Activated CD8-positive, alpha-beta T cell treated with anti-CD3 and anti-CD28 coated beads, Interleukin-2, amount 10 ng/mL, durations not matched to agents 7 days and 5 days (primary cell): ENCODE measurements at regions of chr11 and their contacts with region 1.

Region 1: DNA sequence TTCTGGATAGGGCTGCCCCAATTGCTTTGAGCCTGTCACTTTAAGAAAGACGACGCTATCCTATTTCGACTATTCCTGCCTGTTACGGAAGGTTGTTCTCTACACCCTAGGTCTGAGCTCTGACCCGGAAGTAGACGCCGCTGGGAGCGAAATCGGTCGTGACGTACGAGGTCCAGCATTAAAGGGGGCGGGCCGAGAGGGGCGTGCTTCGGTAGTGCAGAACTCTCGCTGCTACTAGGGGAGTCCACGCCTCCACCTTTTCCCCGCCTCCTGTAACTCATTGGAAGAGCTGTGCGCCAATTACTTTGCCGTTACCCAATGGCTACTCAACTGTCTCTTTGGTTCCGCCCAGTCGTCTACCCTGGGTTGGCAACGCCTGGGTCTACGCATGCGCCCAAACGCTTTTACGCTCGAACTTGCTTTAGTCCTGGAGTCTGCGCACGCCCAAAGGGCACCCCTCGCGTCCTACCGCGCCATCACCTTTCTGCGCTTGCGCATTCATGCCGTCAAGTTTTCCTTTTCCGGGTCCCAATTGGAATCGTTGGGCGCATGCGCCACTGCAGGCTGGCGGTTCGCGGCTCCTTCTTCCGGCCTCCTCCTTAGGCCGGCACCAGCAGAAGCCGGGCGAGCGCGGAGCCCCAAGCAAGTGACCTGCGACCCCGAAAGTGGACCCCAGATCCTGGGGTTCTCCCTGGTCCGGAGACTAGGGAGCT is at the start of gene PCNX3:
- DNase-seq: peak; percentile 100
- ATAC-seq: peak; percentile 91
- H3K4me3 Mint-ChIP-seq: peak within 1 kb of the TSS; percentile 98
- H3K27ac Mint-ChIP-seq: peak within 1 kb of the TSS; percentile 97
- H3K4me1 Mint-ChIP-seq: peaks cover 44% of the 10 kb centered on the region
- H3K27me3 Mint-ChIP-seq: no peaks in the 10 kb centered on the region
- total RNA-seq, gene PCNX3: 50.1 to 54.8 TPM

Region 2: GRCh38 chr11:65432686-65433582 is 182.5 kb before region 1 on chr11:
- CTCF ChIA-PET with region 1: no interaction called
- POLR2A ChIA-PET with region 1: no interaction called
- DNase-seq: no peak
- ATAC-seq: no peak
- H3K4me3 Mint-ChIP-seq: no peak overlapping the region
- H3K27ac Mint-ChIP-seq: peak overlapping the region; percentile 50
- H3K4me1 Mint-ChIP-seq: peaks cover 82% of the 10 kb centered on the region
- H3K27me3 Mint-ChIP-seq: no peaks in the 10 kb centered on the region

Region 3: GRCh38 chr11:65454696-65455456 is 160.5 kb before region 1 on chr11:
- CTCF ChIA-PET with region 1: no interaction called
- POLR2A ChIA-PET with region 1: no interaction called
- DNase-seq: peak; percentile 90
- ATAC-seq: peak; percentile 97
- H3K4me3 Mint-ChIP-seq: peak overlapping the region; percentile 86
- H3K27ac Mint-ChIP-seq: peak overlapping the region; percentile 83
- H3K4me1 Mint-ChIP-seq: peaks cover 30% of the 10 kb centered on the region
- H3K27me3 Mint-ChIP-seq: no peaks in the 10 kb centered on the region

Region 4: GRCh38 chr11:65569973-65570918 is 45.1 kb before region 1 on chr11 and contains the start of gene ZNRD2:
- CTCF ChIA-PET with region 1: interaction called, 14 read pairs
- POLR2A ChIA-PET with region 1: interaction called, 16 read pairs
- DNase-seq: peak; percentile 99
- ATAC-seq: peak; percentile 70
- H3K4me3 Mint-ChIP-seq: peak within 1 kb of the TSS; percentile 100
- H3K27ac Mint-ChIP-seq: peak within 1 kb of the TSS; percentile 99
- H3K4me1 Mint-ChIP-seq: peaks cover 71% of the 10 kb centered on the region
- H3K27me3 Mint-ChIP-seq: no peaks in the 10 kb centered on the region
- total RNA-seq, gene ZNRD2: 39.2 to 40.7 TPM

Region 5: GRCh38 chr11:65593518-65594298 is 21.7 kb before region 1 on chr11:
- CTCF ChIA-PET with region 1: interaction called, 24 read pairs
- POLR2A ChIA-PET with region 1: interaction called, 6 read pairs
- DNase-seq: peak; percentile 64
- ATAC-seq: peak; percentile 73
- H3K4me3 Mint-ChIP-seq: no peak overlapping the region
- H3K27ac Mint-ChIP-seq: peak overlapping the region; percentile 63
- H3K4me1 Mint-ChIP-seq: peaks cover 18% of the 10 kb centered on the region
- H3K27me3 Mint-ChIP-seq: no peaks in the 10 kb centered on the region

Region 6: DNA sequence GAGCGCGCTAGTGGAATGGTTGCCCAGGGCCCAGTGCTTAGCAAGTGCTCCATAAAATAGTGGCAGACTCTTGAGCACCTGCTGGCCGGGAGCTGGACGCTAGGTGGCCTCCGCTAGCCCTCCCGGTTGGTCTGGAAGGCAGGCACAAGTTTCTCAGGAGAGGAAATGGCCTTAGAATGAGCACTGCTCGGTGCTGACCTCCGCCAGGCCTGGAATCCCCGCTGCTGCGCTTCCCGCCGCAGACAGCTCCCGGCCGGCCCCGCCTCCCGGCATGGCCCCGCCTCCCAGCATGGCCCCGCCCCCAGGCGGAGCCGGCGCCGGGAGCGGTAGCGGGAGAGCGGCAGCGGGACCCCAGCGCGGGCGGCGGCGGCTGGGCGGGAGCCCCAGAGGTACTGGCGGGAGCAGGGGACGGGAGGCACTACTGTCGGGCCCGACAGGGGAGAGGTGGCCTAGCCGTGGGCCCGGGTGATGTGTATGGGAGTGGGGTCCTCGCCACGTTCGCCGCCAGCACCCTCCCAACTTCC is 22.5 kb after region 1 on chr11 and contains the start of gene SIPA1:
- CTCF ChIA-PET with region 1: interaction called, 12 read pairs
- POLR2A ChIA-PET with region 1: interaction called, 24 read pairs
- DNase-seq: peak; percentile 72
- ATAC-seq: peak; percentile 55
- H3K4me3 Mint-ChIP-seq: peak within 1 kb of the TSS; percentile 98
- H3K27ac Mint-ChIP-seq: peak within 1 kb of the TSS; percentile 98
- H3K4me1 Mint-ChIP-seq: peaks cover 68% of the 10 kb centered on the region
- H3K27me3 Mint-ChIP-seq: no peaks in the 10 kb centered on the region
- total RNA-seq, gene SIPA1: 245 to 274 TPM

Region 7: GRCh38 chr11:65726660-65727059 is 111.3 kb after region 1 on chr11:
- CTCF ChIA-PET with region 1: no interaction called
- POLR2A ChIA-PET with region 1: no interaction called
- DNase-seq: no peak
- ATAC-seq: no peak
- H3K4me3 Mint-ChIP-seq: no peak overlapping the region
- H3K27ac Mint-ChIP-seq: no peak overlapping the region
- H3K4me1 Mint-ChIP-seq: peaks cover 5% of the 10 kb centered on the region
- H3K27me3 Mint-ChIP-seq: peaks cover 5% of the 10 kb centered on the region